ENCODE measurements at regions of chr1 and their contacts with region 1.

Region 1: GRCh38 chr1:110766025-110766647 is 91.4 kb upstream of the KCNA3 start:
- DNase-seq: peak; percentile 64
- H3K4me3 ChIP-seq: no peak overlapping the region
- H3K27ac ChIP-seq: no peak overlapping the region
- H3K4me1 ChIP-seq: no peaks in the 10 kb centered on the region
- H3K27me3 ChIP-seq: peaks cover 24% of the 10 kb centered on the region
- CTCF ChIP-seq: peak; percentile 86

Region 2: DNA sequence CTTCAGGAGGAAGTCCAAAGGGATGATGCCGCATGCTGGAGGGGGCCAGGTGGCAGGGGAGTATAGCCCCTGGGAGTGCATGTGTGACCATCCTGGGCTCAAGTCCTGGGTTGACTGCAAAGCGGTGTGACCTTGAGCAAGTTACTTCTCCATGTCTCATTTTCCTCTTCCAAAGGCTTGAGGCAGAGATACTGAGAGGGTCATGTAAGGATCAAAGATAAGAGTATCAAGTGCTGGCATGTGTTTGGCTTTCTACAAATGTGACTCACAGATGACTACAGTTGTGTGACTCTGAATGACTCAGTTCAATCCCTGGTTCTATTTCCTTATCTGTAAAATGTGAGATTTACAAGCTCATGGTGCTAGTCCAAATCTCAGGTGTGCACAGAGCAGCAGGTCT is 289.1 kb before region 1 on chr1:
- CTCF ChIA-PET with region 1: no interaction called
- POLR2A ChIA-PET with region 1: no interaction called
- intact Hi-C with region 1: no loop called
- DNase-seq: no peak
- H3K4me3 ChIP-seq: no peak overlapping the region
- H3K27ac ChIP-seq: no peak overlapping the region
- H3K4me1 ChIP-seq: no peaks in the 10 kb centered on the region
- H3K27me3 ChIP-seq: no peaks in the 10 kb centered on the region
- CTCF ChIP-seq: no peak

Region 3: DNA sequence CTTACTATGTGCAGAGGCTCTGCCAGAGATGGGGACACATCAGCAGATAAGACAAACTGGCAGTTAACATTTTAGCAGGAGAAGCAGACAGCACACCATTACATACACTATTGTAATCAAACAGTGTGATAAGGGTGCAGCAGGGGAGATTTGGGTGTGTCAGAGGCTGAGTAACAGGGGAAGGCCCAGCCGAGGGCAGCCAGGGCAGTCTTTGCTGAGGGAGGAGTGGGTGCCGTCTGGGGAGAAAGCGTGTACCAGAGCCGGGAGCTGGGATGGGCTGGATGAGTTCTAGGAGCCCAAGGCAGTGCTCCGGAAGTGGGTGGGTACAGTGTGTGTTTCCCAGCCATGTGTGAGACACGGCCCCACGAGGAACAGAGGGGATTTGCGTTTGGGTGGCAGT is 278.4 kb before region 1 on chr1:
- CTCF ChIA-PET with region 1: no interaction called
- POLR2A ChIA-PET with region 1: no interaction called
- intact Hi-C with region 1: no loop called
- DNase-seq: no peak
- H3K4me3 ChIP-seq: no peak overlapping the region
- H3K27ac ChIP-seq: no peak overlapping the region
- H3K4me1 ChIP-seq: no peaks in the 10 kb centered on the region
- H3K27me3 ChIP-seq: no peaks in the 10 kb centered on the region
- CTCF ChIP-seq: no peak

Region 4: GRCh38 chr1:110524311-110525251 is 241.6 kb before region 1 on chr1:
- CTCF ChIA-PET with region 1: no interaction called
- POLR2A ChIA-PET with region 1: no interaction called
- intact Hi-C with region 1: loop called (anchors 5 kb)
- DNase-seq: peak; percentile 72
- H3K4me3 ChIP-seq: no peak overlapping the region
- H3K27ac ChIP-seq: no peak overlapping the region
- H3K4me1 ChIP-seq: no peaks in the 10 kb centered on the region
- H3K27me3 ChIP-seq: no peaks in the 10 kb centered on the region
- CTCF ChIP-seq: peak; percentile 93

Region 5: DNA sequence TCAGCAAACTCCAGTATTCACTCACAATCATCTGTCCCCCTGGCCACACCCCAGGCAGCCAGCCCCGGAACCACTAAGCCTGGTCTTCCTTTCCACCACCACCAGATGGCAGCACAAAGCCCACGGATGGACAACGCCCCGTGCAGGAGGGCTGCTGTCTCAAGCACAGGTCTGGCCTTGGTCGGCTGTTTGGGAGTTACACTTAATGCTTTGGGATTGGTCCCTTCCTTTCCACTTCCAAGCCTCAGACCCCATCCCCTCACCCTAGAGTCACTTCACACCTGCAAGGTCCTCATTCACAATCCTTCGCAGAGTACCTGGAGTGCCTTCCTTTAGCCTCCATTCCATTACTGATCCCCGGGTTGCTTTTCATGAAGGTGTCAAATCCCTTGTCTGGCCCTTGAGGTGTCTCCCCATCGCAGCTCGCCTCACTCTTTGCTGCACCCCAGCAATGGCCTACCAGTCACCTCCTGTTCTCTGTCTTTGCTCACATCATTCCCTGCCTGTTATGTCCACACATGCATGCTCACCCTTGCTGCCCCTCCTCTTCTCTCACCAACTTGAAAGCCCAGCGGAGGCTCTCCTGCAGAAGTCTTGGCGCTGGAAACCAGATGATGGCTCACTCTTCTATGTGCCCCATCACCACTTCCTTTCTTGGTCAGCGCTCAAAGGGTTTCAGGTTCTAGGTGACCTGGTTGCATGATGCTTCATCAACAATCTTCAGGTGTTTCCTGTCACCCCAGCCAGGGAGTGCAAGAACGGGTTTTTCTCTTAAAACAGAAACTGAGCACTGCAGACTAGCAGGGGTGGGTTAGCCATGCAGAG is 135.1 kb before region 1 on chr1:
- CTCF ChIA-PET with region 1: interaction called, 3 read pairs
- POLR2A ChIA-PET with region 1: no interaction called
- intact Hi-C with region 1: loop called (anchors 1 kb)
- DNase-seq: peak; percentile 85
- H3K4me3 ChIP-seq: no peak overlapping the region
- H3K27ac ChIP-seq: no peak overlapping the region
- H3K4me1 ChIP-seq: peaks cover 11% of the 10 kb centered on the region
- H3K27me3 ChIP-seq: no peaks in the 10 kb centered on the region
- CTCF ChIP-seq: peak; percentile 93